Motor neuron (in vitro differentiated cells): ENCODE measurements at regions of chr16 and their contacts with region 1.

Region 1: GRCh38 chr16:78478267-78478861 is 378.9 kb downstream of the WWOX start:
- ATAC-seq: peak in 3 of 8 experiments; percentile 36 to 60 (median 60)
- H3K4me3 ChIP-seq: no peak overlapping the region
- H3K27ac ChIP-seq: no peak overlapping the region
- H3K4me1 ChIP-seq: peaks cover 2 to 19% of the 10 kb centered on the region in 2 donors

Region 2: GRCh38 chr16:78099372-78100161 is 378.8 kb before region 1 on chr16 and contains the start of gene WWOX:
- in situ Hi-C with region 1: loop called in 1 of 9 experiments (anchors 25 kb)
- ATAC-seq: peak; percentile 95 to 96 (median 96)
- H3K4me3 ChIP-seq: peak within 1 kb of the TSS; percentile 54 to 78 (median 67)
- H3K27ac ChIP-seq: peak within 1 kb of the TSS; percentile 10 to 18
- H3K4me1 ChIP-seq: no peaks in the 10 kb centered on the region
- total RNA-seq, gene WWOX: 10.3 to 27.8 (median 12.3) TPM

Region 3: GRCh38 chr16:78235168-78235800 is 243.1 kb before region 1 on chr16:
- in situ Hi-C with region 1: loop called in 1 of 9 experiments (anchors 25 kb)
- ATAC-seq: peak in 4 of 8 experiments; percentile 21 to 81 (median 77)
- H3K4me3 ChIP-seq: no peak overlapping the region
- H3K27ac ChIP-seq: no peak overlapping the region
- H3K4me1 ChIP-seq: peaks cover 0 to 13% of the 10 kb centered on the region in 2 donors

Region 4: GRCh38 chr16:78720416-78720815 is 242.1 kb after region 1 on chr16:
- in situ Hi-C with region 1: no loop called
- ATAC-seq: no peak
- H3K4me3 ChIP-seq: no peak overlapping the region
- H3K27ac ChIP-seq: no peak overlapping the region
- H3K4me1 ChIP-seq: peaks cover 0 to 5% of the 10 kb centered on the region in 2 donors